ENCODE measurements at regions of chr16 and their contacts with region 1.

Region 1: GRCh38 chr16:24670623-24671454 is 58.6 kb upstream of the TNRC6A start:
- DNase-seq: peak; percentile 29
- H3K4me3 Mint-ChIP-seq: no peak overlapping the region
- H3K27ac Mint-ChIP-seq: peak overlapping the region; percentile 82
- H3K4me1 Mint-ChIP-seq: peaks cover 14% of the 10 kb centered on the region
- H3K27me3 Mint-ChIP-seq: no peaks in the 10 kb centered on the region
- CTCF ChIP-seq: no peak

Region 2: GRCh38 chr16:24525970-24526559 is 144.8 kb before region 1 on chr16:
- CTCF ChIA-PET with region 1: no interaction called
- POLR2A ChIA-PET with region 1: no interaction called
- intact Hi-C with region 1: no loop called
- DNase-seq: peak; percentile 72
- H3K4me3 Mint-ChIP-seq: no peak overlapping the region
- H3K27ac Mint-ChIP-seq: peak overlapping the region; percentile 65
- H3K4me1 Mint-ChIP-seq: peaks cover 16% of the 10 kb centered on the region
- H3K27me3 Mint-ChIP-seq: no peaks in the 10 kb centered on the region
- CTCF ChIP-seq: no peak

Region 3: DNA sequence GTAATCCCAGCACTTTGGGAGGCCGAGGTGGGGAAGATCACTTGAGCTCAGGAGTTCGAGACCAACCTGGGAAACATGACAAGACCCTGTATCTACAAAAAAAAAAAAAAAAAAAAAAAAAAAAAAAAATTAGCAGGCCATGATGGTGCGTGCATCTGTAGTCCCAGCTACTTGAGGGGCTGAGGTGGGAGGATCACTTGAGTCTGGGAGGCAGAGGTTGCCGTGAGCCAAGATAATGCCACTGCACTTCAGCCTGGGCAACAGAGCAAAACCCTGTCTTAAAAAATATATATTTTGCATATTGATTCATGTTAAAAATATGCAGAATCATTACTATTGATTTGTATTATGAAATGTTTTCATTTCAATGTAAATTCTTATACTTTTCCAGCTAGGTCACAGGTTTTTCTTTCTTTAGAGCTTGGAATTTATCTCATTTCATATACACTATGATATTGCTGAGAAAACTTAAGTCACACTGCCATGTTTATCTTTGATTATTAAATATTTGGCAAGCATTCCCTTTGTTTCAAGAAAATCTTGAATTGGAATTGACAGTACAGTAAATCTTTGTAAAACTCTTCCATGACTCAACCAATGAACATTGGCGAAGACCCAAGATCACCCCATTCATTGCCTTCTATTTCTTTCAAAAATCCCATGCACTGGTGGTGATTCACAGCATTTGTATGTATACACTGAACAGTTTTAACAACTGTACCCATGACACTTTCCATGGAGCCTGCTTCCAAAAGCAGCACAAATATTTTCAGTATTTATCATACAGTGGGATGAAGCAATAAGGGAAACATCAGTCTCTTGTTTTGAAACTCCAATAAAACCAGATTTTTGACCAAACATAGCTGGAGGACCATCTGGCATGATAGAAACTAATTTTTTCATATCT is 24.8 kb before region 1 on chr16:
- CTCF ChIA-PET with region 1: no interaction called
- POLR2A ChIA-PET with region 1: interaction called, 13 read pairs
- intact Hi-C with region 1: loop called (anchors 1 kb)
- DNase-seq: peak; percentile 99
- H3K4me3 Mint-ChIP-seq: no peak overlapping the region
- H3K27ac Mint-ChIP-seq: peak overlapping the region; percentile 67
- H3K4me1 Mint-ChIP-seq: no peaks in the 10 kb centered on the region
- H3K27me3 Mint-ChIP-seq: no peaks in the 10 kb centered on the region
- CTCF ChIP-seq: no peak

Region 4: DNA sequence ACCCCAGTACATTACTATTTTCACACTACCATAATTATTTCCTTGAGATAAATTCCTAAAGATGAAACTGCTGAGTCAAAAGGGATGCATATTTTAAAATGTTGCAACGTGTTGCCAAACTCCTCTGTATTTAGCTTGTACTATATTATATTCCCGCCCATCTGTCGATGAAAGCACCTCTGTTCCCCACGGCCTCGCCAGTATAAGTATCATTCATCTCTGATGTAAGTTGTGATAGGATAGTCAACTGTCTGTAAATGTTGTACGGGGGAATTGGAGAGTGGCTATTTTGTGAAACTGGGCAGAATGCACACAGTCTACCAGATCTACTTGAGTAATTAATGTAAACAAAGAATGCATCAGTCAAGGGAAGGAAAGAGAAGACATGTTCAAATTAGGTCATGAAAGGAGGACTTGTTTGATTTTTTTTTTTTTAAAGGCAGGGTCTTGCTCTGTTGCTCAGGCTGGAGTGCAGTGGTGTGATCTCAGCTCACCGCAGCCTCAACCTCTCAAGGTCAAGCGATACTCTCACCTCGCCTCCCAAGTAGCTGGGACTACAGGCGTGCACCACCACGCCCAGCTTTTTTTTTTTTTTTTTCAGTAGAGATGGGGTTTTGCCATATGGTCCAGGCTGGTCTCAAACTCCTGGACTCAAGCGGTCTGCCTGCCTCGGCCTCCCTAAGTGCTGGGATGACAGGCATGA is 11.1 kb after region 1 on chr16:
- CTCF ChIA-PET with region 1: interaction called, 3 read pairs
- POLR2A ChIA-PET with region 1: interaction called, 12 read pairs
- intact Hi-C with region 1: no loop called
- DNase-seq: peak; percentile 78
- H3K4me3 Mint-ChIP-seq: no peak overlapping the region
- H3K27ac Mint-ChIP-seq: peak overlapping the region; percentile 77
- H3K4me1 Mint-ChIP-seq: peaks cover 6% of the 10 kb centered on the region
- H3K27me3 Mint-ChIP-seq: no peaks in the 10 kb centered on the region
- CTCF ChIP-seq: no peak

Region 5: GRCh38 chr16:24761526-24761925 is 90.7 kb after region 1 on chr16:
- CTCF ChIA-PET with region 1: no interaction called
- POLR2A ChIA-PET with region 1: no interaction called
- intact Hi-C with region 1: no loop called
- DNase-seq: no peak
- H3K4me3 Mint-ChIP-seq: no peak overlapping the region
- H3K27ac Mint-ChIP-seq: no peak overlapping the region
- H3K4me1 Mint-ChIP-seq: peaks cover 7% of the 10 kb centered on the region
- H3K27me3 Mint-ChIP-seq: no peaks in the 10 kb centered on the region
- CTCF ChIP-seq: no peak